ENCODE measurements at regions of chrX and their contacts with region 1.

Region 1: GRCh38 chrX:109714340-109714958 is 18.6 kb downstream of the ACSL4 start:
- DNase-seq: no peak

Region 2: GRCh38 chrX:109667986-109668385 is 46.5 kb before region 1 on chrX:
- intact Hi-C with region 1: no loop called
- DNase-seq: no peak

Region 3: DNA sequence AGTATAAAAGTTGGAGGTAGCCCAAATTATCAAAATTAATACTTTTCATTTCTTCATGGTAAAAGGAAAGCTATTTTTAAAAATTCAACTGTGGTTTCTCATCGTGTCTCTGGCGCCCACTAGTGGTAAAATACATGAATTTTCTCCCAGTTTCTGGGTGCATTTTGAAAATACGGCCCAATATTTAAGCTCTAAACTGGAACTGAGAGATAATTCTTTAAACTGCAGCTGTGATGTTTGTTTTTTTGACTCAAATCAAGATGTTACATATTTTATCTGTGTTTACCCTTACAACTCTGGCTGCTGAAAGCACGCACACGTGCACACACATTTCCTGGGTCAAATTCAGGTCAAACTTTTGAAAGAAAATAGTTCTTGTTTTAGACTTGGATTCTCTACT is 142.5 kb after region 1 on chrX:
- intact Hi-C with region 1: loop called (anchors 5 kb)
- DNase-seq: no peak